ENCODE measurements at regions of chr2 and their contacts with region 1.

Region 1: GRCh38 chr2:120231974-120232635 is 8.9 kb upstream of the TMEM185B start:
- DNase-seq: peak; percentile 85
- ATAC-seq: peak; percentile 90
- H3K4me3 Mint-ChIP-seq: peak overlapping the region; percentile 90
- H3K27ac Mint-ChIP-seq: peak overlapping the region; percentile 99
- H3K4me1 Mint-ChIP-seq: peaks cover 57% of the 10 kb centered on the region
- H3K27me3 Mint-ChIP-seq: no peaks in the 10 kb centered on the region
- CTCF ChIP-seq: no peak

Region 2: DNA sequence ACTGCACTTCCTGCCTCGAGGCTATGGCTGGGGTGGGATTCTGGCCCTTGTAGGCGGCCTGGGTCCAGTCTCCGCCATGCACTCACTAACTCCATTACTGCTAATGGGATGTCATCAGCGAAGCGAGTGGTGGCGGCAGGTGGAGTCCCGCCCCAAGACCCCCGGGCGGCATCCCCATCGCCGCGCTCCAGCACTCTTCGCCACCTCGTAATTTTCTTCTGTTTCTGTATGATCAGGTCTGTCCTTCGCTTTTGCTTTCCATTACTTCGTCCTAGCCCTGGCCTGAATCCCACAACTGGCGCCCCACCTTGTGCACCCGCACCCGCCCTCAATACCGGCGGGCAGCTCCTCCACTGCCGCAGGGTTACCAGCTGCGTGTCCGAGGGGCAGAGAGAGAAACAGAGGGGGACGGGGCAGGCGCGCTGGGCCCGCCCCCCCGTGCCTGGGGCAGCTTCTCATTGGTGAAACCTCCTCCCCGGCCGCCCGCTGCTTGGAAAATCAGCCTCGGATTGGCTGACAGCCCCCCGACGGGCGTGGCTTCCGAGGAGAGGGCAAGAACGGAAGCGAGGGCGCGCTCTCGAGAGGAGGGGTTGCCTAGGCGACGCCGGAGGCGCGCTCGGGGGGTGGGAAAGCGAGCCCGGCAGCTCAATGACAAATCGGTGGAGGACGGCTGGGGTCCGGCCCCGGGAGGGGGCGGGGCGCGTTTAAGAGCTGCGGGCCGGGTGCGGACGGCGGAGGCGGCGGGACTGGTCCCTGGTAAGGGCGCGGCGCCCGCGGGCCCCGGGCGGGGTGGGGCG is 20.3 kb after region 1 on chr2 and contains the start of gene RALB:
- CTCF ChIA-PET with region 1: interaction called, 7 read pairs
- POLR2A ChIA-PET with region 1: interaction called, 13 read pairs
- intact Hi-C with region 1: no loop called
- DNase-seq: peak; percentile 99
- ATAC-seq: peak; percentile 97
- H3K4me3 Mint-ChIP-seq: peak within 1 kb of the TSS; percentile 95
- H3K27ac Mint-ChIP-seq: peak within 1 kb of the TSS; percentile 87
- H3K4me1 Mint-ChIP-seq: peaks cover 35% of the 10 kb centered on the region
- H3K27me3 Mint-ChIP-seq: peaks cover 2% of the 10 kb centered on the region
- CTCF ChIP-seq: no peak
- total RNA-seq, gene RALB: 16.7 to 17.6 TPM

Region 3: GRCh38 chr2:120939595-120940318 is 707.7 kb after region 1 on chr2:
- CTCF ChIA-PET with region 1: no interaction called
- POLR2A ChIA-PET with region 1: no interaction called
- intact Hi-C with region 1: no loop called
- DNase-seq: no peak
- ATAC-seq: no peak
- H3K4me3 Mint-ChIP-seq: no peak overlapping the region
- H3K27ac Mint-ChIP-seq: no peak overlapping the region
- H3K4me1 Mint-ChIP-seq: no peaks in the 10 kb centered on the region
- H3K27me3 Mint-ChIP-seq: no peaks in the 10 kb centered on the region
- CTCF ChIP-seq: no peak